ENCODE measurements at regions of chr11 and their contacts with region 1.

Region 1: DNA sequence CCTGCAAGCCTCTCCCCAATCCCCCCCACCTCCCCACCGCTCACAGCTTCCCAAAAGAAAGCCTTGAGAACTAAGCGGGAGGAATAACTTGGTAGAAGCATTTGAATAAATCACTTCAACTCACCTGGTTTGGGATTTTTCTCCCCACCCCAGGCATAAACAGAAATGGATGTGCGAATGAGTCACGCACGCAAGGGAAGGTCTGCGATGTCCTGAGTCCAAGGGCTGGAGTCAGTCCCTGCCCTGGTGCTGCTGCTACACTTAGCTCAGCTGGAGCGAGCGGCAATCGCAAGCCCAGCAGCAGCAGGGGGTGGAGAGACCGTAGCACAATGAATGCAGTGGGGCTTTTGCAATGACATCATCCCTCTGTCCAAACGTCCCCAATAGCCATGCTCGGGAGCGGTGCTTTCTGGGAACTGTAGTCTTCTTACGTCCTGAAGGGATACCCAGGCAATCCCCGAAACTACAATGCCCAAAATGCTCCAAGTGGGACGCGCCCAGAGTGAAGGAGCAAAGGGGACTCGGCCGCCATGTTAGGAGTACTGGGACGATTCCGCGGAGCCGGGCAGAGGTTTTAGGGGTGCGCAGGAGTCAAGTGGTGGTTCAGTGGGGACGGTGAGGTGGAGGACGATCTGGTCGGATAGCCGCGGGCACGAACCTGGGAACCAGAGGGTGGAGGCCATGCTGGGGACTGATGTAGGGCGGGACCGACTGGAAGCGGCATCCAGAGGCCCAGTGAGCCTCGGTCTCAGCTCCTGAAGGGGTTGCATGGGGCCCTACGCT is at the start of gene RAB30:
- DNase-seq: peak; percentile 99
- ATAC-seq: peak; percentile 99
- H3K4me3 ChIP-seq: peak within 1 kb of the TSS; percentile 85 to 99
- H3K27ac ChIP-seq: peak within 1 kb of the TSS; percentile 98
- H3K4me1 ChIP-seq: peaks cover 25% of the 10 kb centered on the region
- H3K27me3 ChIP-seq: no peaks in the 10 kb centered on the region
- CTCF ChIP-seq: no peak
- total RNA-seq, gene RAB30: 19.0 TPM

Region 2: DNA sequence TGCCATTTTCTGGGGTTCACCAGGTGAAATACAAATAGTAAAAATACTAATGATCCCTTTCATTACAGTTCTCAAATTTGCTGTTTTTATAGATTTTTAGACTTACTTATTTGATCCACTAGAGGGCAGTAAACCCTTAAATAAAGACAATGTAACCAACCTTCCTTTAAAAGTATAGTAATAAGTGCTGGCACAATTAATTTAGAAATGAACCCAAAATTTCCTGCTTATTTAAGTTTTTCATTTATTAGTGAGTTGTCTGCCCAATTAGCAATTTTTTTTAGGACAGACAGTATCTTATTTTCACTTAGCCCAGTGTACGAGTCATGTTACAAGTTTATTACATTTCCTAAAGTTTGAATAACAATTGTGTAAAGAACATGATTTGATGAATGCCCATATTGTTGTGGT is 165.5 kb before region 1 on chr11:
- CTCF ChIA-PET with region 1: interaction called, 4 read pairs
- POLR2A ChIA-PET with region 1: no interaction called
- in situ Hi-C with region 1: no loop called
- intact Hi-C with region 1: loop called (anchors 5 kb)
- DNase-seq: no peak
- ATAC-seq: no peak
- H3K4me3 ChIP-seq: no peak overlapping the region
- H3K27ac ChIP-seq: no peak overlapping the region
- H3K4me1 ChIP-seq: peaks cover 10% of the 10 kb centered on the region
- H3K27me3 ChIP-seq: no peaks in the 10 kb centered on the region
- CTCF ChIP-seq: peak; percentile 65; the same call in 1 of the 2 replicates

Region 3: DNA sequence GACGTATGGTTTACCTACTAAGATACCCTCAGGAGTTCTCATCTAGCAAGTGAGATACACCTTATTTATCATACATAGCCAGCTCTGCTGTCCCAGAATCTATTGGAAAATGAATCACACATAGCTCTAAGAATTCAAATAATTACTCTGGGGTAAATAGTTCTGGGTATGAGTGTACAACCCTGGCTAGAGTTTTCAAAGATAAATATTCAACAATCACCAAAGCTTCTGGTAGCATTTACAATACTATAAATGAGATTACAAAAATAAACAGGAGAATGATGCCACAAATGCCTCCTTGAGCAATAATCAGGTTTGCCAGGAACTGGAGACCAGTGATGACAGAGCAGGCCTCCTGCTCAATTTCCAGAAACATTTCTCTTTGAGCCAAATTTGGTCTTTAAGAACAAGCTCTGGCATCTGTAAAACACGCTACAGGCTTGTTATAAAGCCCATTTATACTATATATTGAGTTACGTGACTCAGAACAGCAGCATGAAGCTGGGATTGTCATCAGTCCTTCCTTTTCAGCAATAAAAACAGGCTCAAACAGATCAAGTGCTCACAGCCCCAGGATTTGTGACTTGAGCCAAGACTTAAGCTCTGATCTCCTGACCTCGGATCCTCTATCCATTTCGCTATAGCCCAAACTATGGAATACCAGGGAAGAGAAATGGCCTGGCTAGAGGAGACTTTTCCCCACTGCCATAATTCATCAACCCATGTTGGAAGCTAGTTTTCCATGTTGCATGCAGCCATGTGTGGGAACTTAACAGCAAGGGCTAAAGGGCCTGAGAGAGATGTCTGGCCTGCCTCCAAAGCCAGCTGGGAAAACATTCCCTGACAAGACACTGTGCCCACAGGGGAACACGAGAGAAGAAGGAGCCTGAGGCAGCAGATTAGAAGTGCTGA is 19.7 kb before region 1 on chr11:
- CTCF ChIA-PET with region 1: no interaction called
- POLR2A ChIA-PET with region 1: interaction called, 14 read pairs
- in situ Hi-C with region 1: no loop called
- intact Hi-C with region 1: no loop called
- DNase-seq: peak; percentile 84
- ATAC-seq: peak; percentile 88
- H3K4me3 ChIP-seq: peak overlapping the region in 1 of 2 experiments; percentile 10; a peak in 1 of 4 replicates
- H3K27ac ChIP-seq: peak overlapping the region; percentile 75
- H3K4me1 ChIP-seq: peaks cover 44% of the 10 kb centered on the region
- H3K27me3 ChIP-seq: no peaks in the 10 kb centered on the region
- CTCF ChIP-seq: no peak

Region 4: GRCh38 chr11:83292709-83293456 is 221.1 kb after region 1 on chr11:
- CTCF ChIA-PET with region 1: no interaction called
- POLR2A ChIA-PET with region 1: no interaction called
- in situ Hi-C with region 1: no loop called
- intact Hi-C with region 1: no loop called
- DNase-seq: peak; percentile 17
- ATAC-seq: peak; percentile 93
- H3K4me3 ChIP-seq: no peak overlapping the region
- H3K27ac ChIP-seq: no peak overlapping the region
- H3K4me1 ChIP-seq: no peaks in the 10 kb centered on the region
- H3K27me3 ChIP-seq: peaks cover 2% of the 10 kb centered on the region; the same call in 1 of the 2 replicates
- CTCF ChIP-seq: peak; percentile 85

Measured in Panc1 (cell line).